ENCODE measurements at regions of chr4 and their contacts with region 1.

Region 1: DNA sequence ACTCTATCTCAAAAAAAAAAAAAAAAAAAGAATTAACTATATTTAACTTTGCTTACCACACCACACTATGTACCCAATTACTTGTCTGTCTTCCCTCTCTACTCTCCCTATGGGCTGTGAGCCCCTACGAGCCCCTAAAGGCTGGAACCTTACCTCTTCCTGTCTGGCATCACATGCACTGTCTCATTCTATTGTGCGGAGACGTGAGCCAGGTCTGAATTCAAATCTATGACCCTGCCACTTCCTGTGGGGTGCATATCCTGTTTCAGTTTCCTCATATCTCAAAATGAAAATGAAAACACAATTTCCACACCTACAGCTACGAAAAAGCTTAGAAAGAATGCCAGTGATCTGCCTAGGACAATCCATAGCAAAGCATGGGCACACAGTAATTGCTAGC is 42.9 kb upstream of the HS3ST1 start:
- DNase-seq: peak; percentile 67
- ATAC-seq: peak; percentile 95
- H3K4me3 Mint-ChIP-seq: peak overlapping the region; percentile 13
- H3K27ac Mint-ChIP-seq: peak overlapping the region; percentile 82
- H3K4me1 Mint-ChIP-seq: peaks cover 33% of the 10 kb centered on the region
- H3K27me3 Mint-ChIP-seq: no peaks in the 10 kb centered on the region

Region 2: DNA sequence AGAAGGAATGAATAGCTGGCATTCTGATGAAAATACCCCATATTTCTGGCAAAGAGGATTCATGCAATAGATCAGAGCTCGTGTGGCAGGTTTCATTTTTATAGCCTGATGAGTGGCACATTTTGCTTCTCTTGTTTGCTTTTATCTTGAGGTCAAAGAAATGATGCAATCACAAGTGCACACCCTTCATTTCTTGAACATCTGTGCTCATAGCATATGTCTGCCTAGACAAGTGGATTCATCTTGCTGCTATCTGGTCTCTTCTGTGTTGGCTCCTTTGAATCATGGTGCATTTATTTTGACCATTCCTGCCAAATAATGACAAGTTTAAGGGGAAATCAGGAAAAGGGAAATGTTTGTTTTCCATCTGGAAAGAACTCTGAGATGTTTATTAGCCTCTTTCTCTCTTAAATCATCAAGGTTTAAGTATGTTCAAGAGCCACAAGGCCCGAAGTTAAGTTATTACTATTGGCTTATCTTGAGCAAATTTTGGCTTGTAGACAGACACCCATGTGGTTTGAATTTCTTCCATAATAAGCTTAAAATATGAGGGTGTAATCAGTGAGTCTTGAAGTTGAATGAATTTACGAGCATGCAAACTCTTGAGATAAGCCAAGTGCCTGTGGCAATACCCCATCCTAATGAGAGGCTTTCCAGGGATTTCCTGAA is 16.4 kb after region 1 on chr4:
- CTCF ChIA-PET with region 1: interaction called, 4 read pairs
- POLR2A ChIA-PET with region 1: interaction called, 3 read pairs
- intact Hi-C with region 1: loop called in 1 of 2 experiments (anchors 2 kb)
- DNase-seq: no peak
- ATAC-seq: peak; percentile 33
- H3K4me3 Mint-ChIP-seq: no peak overlapping the region
- H3K27ac Mint-ChIP-seq: peak overlapping the region; percentile 66
- H3K4me1 Mint-ChIP-seq: peaks cover 39% of the 10 kb centered on the region
- H3K27me3 Mint-ChIP-seq: no peaks in the 10 kb centered on the region

Region 3: GRCh38 chr4:11505221-11505971 is 33.8 kb after region 1 on chr4:
- CTCF ChIA-PET with region 1: interaction called, 3 read pairs
- POLR2A ChIA-PET with region 1: no interaction called
- intact Hi-C with region 1: loop called (anchors 1 to 2 kb)
- DNase-seq: peak; percentile 52
- ATAC-seq: peak; percentile 98
- H3K4me3 Mint-ChIP-seq: no peak overlapping the region
- H3K27ac Mint-ChIP-seq: no peak overlapping the region
- H3K4me1 Mint-ChIP-seq: peaks cover 25% of the 10 kb centered on the region
- H3K27me3 Mint-ChIP-seq: no peaks in the 10 kb centered on the region

Region 4: DNA sequence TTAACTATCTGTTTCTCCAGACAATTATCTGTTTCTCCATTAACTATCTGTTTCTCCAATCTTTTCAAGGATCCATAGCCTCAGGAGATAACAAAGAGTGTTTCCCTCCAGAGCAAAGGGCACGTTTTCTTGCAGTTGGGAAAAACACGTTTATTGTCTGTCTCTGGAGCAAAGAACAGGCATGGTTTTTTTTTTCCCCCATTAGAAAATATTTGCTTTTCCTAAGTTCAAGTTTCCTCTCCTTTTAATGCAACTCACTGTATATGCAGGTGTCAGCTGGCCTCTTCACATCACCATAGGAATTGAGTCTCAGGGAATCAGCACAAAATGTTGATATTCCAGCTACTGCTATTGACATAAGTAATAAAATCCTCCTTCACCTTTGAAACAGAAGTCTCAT is 1028.1 kb after region 1 on chr4:
- CTCF ChIA-PET with region 1: no interaction called
- POLR2A ChIA-PET with region 1: no interaction called
- intact Hi-C with region 1: no loop called
- DNase-seq: no peak
- ATAC-seq: no peak
- H3K4me3 Mint-ChIP-seq: no peak overlapping the region
- H3K27ac Mint-ChIP-seq: no peak overlapping the region
- H3K4me1 Mint-ChIP-seq: no peaks in the 10 kb centered on the region
- H3K27me3 Mint-ChIP-seq: no peaks in the 10 kb centered on the region

Measured in activated CD4-positive, alpha-beta T cell treated with anti-CD3 and anti-CD28 coated beads for 36 hours (primary cell).